AG04450 (cell line): ENCODE measurements at regions of chr20 and their contacts with region 1.

Region 1: DNA sequence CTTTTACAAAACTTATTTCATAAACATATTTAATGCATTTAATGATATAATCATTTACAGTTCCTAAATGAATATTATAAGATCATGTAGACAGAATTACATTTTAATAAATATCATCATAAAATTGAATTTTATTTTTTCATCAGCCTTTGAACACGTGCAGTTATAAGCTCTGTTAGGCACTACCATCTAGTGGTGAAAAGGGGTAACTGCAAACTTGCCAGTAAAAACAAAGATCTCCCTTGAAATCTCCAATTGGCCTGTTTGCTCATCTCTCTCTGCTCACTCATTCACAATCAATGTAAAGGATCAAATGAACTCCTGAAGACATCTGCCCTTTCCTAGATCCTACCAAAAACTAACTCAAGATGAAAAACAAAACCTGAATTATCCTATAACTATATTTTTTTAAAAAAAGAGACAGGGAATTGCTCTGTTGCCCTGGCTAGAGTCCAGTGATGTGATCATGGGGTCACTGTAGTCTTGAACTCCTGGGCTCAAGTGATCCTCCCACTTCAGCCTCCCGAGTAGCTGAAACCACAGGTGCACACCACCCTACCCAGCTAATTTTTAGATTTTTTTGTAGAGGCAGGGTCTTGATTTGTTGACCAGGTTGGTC is 31.7 kb downstream of the SAMHD1 start:
- DNase-seq: peak; percentile 29
- H3K4me3 ChIP-seq: no peak overlapping the region
- H3K27ac ChIP-seq: no peak overlapping the region
- H3K27me3 ChIP-seq: no peaks in the 10 kb centered on the region
- CTCF ChIP-seq: peak; percentile 96

Region 2: DNA sequence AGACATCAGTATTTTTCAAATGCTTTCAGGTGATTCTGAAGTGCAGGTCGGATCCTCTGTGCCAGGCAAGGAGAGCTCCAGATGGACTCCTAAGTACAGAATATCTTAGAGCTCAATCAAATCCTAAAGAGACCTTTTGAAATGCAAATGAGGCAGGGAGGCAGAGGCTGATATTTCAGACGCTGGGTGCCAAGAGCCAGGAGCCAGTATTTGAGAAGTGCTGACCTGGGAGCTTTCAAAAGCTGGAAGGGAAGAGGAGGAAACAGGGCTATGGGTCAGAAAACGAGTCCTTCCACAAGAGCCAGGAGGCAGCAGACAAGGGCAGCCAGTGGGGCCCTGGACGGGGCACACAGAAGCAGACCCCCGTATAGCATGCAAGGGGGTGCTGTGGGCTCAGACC is 100.2 kb before region 1 on chr20:
- CTCF ChIA-PET with region 1: no interaction called
- POLR2A ChIA-PET with region 1: no interaction called
- DNase-seq: no peak
- H3K4me3 ChIP-seq: no peak overlapping the region
- H3K27ac ChIP-seq: no peak overlapping the region
- H3K27me3 ChIP-seq: no peaks in the 10 kb centered on the region
- CTCF ChIP-seq: no peak

Region 3: GRCh38 chr20:36908603-36909002 is 11.2 kb before region 1 on chr20:
- CTCF ChIA-PET with region 1: interaction called, 19 read pairs
- POLR2A ChIA-PET with region 1: no interaction called
- DNase-seq: no peak
- H3K4me3 ChIP-seq: no peak overlapping the region
- H3K27ac ChIP-seq: no peak overlapping the region
- H3K27me3 ChIP-seq: no peaks in the 10 kb centered on the region
- CTCF ChIP-seq: no peak